Ascending aorta (tissue), 2 donors: ENCODE measurements at regions of chr4 and their contacts with region 1.

Region 1: DNA sequence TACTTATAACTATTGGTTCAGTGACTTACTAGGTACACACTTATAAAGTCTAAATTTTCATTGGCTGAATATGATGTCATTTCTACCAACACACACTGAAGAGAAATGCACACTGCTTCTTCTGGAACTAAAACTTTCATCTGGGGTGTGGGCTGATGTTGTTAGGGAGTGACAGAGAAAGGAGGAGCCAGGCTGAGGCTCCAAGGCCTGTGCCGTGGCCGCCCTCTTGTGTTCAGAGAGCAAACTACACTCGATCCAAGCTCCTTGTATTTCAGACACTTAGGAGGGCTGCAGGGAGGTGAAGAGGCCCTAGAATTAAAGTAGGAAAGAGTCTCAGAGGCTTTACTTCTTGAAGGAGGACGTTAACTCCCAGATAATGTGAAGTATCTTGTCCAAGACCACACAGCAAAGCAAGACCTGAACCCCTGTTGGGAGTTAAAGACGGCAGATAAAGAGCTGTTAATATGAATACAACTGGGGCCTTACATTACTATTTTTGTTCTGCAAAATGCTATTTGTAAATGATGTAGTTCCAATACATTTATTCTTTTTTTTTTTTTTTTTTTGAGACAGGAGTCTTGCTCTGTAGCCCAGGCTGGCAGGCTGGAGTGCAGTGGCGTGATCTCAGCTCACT is 137.5 kb downstream of the AFAP1 start:
- DNase-seq: peak in 1 of 2 donors; percentile 91
- H3K4me3 ChIP-seq: no peak overlapping the region
- H3K27ac ChIP-seq: no peak overlapping the region
- H3K4me1 ChIP-seq: peaks cover 21 to 30% of the 10 kb centered on the region in 2 donors
- H3K27me3 ChIP-seq: no peaks in the 10 kb centered on the region
- CTCF ChIP-seq: peak; percentile 90 to 95 (median 93)

Region 2: DNA sequence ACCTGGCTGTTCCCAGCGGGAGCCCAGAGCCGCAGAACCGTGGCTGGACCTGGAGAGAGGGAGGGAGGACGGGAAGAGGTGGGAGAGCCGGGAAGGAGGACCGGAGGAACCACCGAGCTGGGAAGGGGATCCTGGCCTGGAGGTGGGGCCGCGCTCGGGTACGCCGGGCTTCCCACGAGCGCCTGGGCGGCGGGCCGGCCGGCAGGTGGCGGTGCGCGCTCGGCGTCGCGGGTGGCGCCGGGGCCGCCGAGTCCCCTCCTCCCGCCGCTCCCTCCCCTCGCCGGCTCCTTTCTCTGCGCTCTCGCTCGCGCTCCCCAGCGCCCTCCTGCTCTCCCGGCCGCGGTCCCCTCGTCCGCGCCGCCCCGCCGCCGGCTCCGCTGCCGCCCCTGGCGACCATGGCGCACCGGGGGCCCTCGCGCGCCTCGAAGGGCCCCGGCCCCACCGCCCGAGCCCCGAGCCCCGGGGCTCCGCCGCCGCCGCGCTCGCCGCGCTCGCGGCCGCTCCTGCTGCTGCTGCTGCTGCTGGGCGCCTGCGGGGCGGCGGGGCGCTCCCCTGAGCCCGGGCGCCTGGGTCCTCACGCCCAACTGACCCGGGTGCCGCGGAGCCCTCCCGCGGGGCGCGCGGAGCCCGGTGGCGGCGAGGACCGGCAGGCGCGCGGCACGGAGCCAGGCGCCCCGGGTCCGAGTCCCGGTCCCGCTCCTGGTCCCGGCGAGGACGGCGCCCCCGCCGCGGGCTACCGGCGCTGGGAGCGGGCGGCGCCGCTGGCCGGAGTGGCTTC is 609.8 kb before region 1 on chr4 and contains the start of gene SORCS2:
- intact Hi-C with region 1: loop called (anchors 5 kb)
- DNase-seq: peak in 1 of 2 donors; percentile 67
- H3K4me3 ChIP-seq: peak within 1 kb of the TSS; percentile 44
- H3K27ac ChIP-seq: no peak within 1 kb of the TSS
- H3K4me1 ChIP-seq: peaks cover 6 to 12% of the 10 kb centered on the region in 2 donors
- H3K27me3 ChIP-seq: peaks cover 24% of the 10 kb centered on the region
- CTCF ChIP-seq: peak; percentile 32 to 86 (median 45)
- total RNA-seq, gene SORCS2: 0.32 TPM

Region 3: GRCh38 chr4:7590189-7590588 is 212.0 kb before region 1 on chr4:
- intact Hi-C with region 1: no loop called
- DNase-seq: no peak
- H3K4me3 ChIP-seq: no peak overlapping the region
- H3K27ac ChIP-seq: no peak overlapping the region
- H3K4me1 ChIP-seq: no peaks in the 10 kb centered on the region
- H3K27me3 ChIP-seq: no peaks in the 10 kb centered on the region
- CTCF ChIP-seq: no peak

Region 4: DNA sequence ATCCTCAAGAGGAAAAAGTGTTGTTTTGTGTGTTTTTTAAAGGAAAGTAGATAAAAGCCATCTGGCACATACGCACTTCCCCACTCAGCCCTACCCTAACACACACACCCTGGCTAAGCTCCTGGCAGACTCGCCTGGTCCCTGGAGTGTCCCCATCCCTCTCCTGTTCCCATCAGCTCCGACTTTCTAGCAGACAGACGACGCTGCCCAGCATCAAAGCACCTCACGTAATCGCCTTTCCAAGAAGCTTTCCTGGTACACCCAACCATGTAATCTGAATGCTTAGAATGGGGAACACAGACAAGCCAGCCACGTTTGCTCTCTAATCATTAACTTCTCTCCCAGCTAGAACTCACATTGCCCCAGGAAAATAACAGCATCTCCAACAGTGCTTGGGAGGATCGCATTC is 21.2 kb after region 1 on chr4:
- intact Hi-C with region 1: loop called (anchors 2 kb)
- DNase-seq: peak in 1 of 2 donors; percentile 85
- H3K4me3 ChIP-seq: peak overlapping the region in 1 of 2 donors; percentile 18
- H3K27ac ChIP-seq: peak overlapping the region; percentile 85 to 90
- H3K4me1 ChIP-seq: peaks cover under 1 to 26% of the 10 kb centered on the region in 2 donors
- H3K27me3 ChIP-seq: no peaks in the 10 kb centered on the region
- CTCF ChIP-seq: no peak

Region 5: DNA sequence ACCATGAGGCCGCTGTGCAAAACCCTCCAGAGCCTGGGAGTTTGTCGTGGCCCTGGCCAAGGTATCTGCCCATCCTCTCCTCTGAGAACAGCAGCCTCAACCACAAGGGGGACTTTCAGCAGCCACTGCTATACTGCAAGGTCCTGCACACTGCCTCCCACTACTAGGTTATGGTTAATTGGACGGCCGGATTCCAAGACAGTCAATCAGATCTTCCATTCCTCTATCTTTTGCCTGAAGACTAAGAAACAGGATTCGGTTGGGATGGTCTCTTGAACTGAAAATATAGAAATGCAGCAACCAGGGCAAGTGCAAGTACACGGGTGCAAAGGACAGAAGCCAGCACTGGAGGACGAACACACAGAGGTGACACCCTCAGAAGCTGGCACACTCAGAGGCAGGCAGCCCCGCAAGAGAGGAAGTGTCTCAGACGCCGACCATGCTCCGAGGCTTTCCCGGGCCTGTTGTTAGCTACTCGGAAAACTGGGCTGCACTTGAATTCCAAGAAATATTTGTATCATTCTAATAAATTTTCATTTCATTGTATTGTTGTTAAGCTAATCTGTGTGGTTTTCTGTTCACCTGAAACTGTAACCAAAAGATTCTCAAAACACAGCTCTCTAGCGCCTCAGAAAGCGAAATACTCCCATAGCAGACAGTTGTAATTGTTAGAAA is 74.1 kb after region 1 on chr4:
- intact Hi-C with region 1: loop called (anchors 2 kb)
- DNase-seq: peak in 1 of 2 donors; percentile 68
- H3K4me3 ChIP-seq: peak overlapping the region in 1 of 2 donors; percentile 20
- H3K27ac ChIP-seq: peak overlapping the region; percentile 60 to 70
- H3K4me1 ChIP-seq: peaks cover 6 to 38% of the 10 kb centered on the region in 2 donors
- H3K27me3 ChIP-seq: no peaks in the 10 kb centered on the region
- CTCF ChIP-seq: peak in 1 of 3 experiments; percentile 5

Region 6: DNA sequence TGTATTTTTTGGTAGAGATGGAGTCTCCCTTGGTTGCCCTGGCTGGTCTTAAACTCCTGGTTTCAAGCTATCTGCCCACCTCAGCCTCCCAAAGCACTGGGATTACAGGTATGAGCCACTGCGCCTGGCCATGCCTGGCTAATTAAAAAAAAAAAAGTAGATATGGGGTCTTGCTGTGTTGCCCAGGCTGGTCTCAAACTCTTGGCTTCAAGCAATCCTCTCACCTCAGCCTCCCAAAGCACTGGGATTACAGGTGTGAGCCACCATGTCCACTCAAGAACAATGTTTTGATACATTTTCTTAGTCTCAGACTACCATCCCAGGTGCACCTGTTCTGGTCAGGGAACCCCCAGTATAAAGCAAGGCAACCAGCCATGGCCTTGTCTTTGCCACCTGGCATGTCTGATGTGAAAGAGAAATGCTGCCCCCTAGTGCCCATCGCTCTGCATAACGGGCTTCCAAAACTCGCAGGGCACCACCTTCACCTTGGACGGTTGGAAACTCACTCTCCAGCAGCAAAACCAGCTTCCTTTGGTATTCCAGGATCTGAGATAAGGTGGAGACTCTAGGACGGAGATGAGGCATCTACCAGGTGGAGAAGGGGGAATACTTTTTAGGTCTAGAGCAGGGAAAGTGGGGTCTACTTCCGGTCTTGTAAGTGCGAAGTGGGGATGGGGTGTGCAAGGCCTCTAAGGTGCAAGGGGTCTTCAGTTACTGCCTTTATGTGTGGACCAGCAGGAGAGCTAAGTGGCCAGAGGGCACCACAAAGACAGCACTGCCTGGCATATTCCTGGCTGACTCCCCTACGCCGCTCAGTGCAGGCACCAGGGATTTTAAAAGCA is 185.2 kb after region 1 on chr4:
- intact Hi-C with region 1: loop called (anchors 1 kb)
- DNase-seq: peak in 1 of 2 donors; percentile 79
- H3K4me3 ChIP-seq: no peak overlapping the region
- H3K27ac ChIP-seq: no peak overlapping the region
- H3K4me1 ChIP-seq: no peaks in the 10 kb centered on the region
- H3K27me3 ChIP-seq: no peaks in the 10 kb centered on the region
- CTCF ChIP-seq: peak; percentile 80 to 91 (median 82)